Heart right ventricle (tissue), 16 donors: ENCODE measurements at regions of chr18 and their contacts with region 1.

Region 1: GRCh38 chr18:36392164-36392978 is 94.9 kb downstream of the FHOD3 start:
- DNase-seq: no peak
- ATAC-seq: peak in 5 of 8 donors; percentile 3 to 35 (median 23)
- H3K4me3 ChIP-seq: no peak overlapping the region
- H3K27ac ChIP-seq: peak overlapping the region; percentile 43 to 88 (median 82)
- H3K4me1 ChIP-seq: peaks cover 0 to 74% (median 46%) of the 10 kb centered on the region in 9 donors
- H3K27me3 ChIP-seq: no peaks in the 10 kb centered on the region
- CTCF ChIP-seq: no peak

Region 2: GRCh38 chr18:36321658-36322407 is 70.5 kb before region 1 on chr18:
- intact Hi-C with region 1: loop called in 1 of 10 experiments (anchors 10 kb)
- DNase-seq: no peak
- ATAC-seq: peak in 7 of 8 donors; percentile 23 to 81 (median 55)
- H3K4me3 ChIP-seq: no peak overlapping the region
- H3K27ac ChIP-seq: peak overlapping the region in 5 of 10 donors; percentile 34 to 58 (median 43)
- H3K4me1 ChIP-seq: peaks cover 4 to 64% (median 31%) of the 10 kb centered on the region in 9 donors
- H3K27me3 ChIP-seq: no peaks in the 10 kb centered on the region
- CTCF ChIP-seq: no peak

Region 3: GRCh38 chr18:36543991-36544725 is 151.8 kb after region 1 on chr18:
- intact Hi-C with region 1: no loop called
- DNase-seq: peak in 1 of 2 donors; percentile 20
- ATAC-seq: peak in 7 of 8 donors; percentile 35 to 75 (median 67)
- H3K4me3 ChIP-seq: no peak overlapping the region
- H3K27ac ChIP-seq: peak overlapping the region in 6 of 10 donors; percentile 34 to 63 (median 42)
- H3K4me1 ChIP-seq: peaks cover 0 to 36% (median 10%) of the 10 kb centered on the region in 9 donors
- H3K27me3 ChIP-seq: no peaks in the 10 kb centered on the region
- CTCF ChIP-seq: no peak

Region 4: GRCh38 chr18:36572135-36572856 is 179.9 kb after region 1 on chr18:
- intact Hi-C with region 1: loop called in 1 of 10 experiments (anchors 10 kb)
- DNase-seq: no peak
- ATAC-seq: peak; percentile 45 to 82 (median 68)
- H3K4me3 ChIP-seq: no peak overlapping the region
- H3K27ac ChIP-seq: peak overlapping the region in 5 of 10 donors; percentile 1 to 31 (median 7)
- H3K4me1 ChIP-seq: peaks cover 0 to 22% (median 5%) of the 10 kb centered on the region in 9 donors
- H3K27me3 ChIP-seq: no peaks in the 10 kb centered on the region
- CTCF ChIP-seq: peak in 8 of 9 donors; percentile 18 to 65 (median 54)